Heart left ventricle (tissue), 16 donors: ENCODE measurements at regions of chr11 and their contacts with region 1.

Region 1: GRCh38 chr11:122697636-122698167 is 42.2 kb downstream of the UBASH3B start:
- DNase-seq: no peak
- ATAC-seq: peak in 3 of 4 donors; percentile 56 to 75 (median 57)
- H3K4me3 ChIP-seq: no peak overlapping the region
- H3K27ac ChIP-seq: peak overlapping the region in 1 of 12 donors; percentile 77
- H3K4me1 ChIP-seq: peaks cover 0 to 31% (median 0%) of the 10 kb centered on the region in 12 donors
- H3K27me3 ChIP-seq: no peaks in the 10 kb centered on the region
- CTCF ChIP-seq: no peak
- POLR2A ChIP-seq: no peak

Region 2: GRCh38 chr11:122523846-122524805 is 173.6 kb before region 1 on chr11:
- intact Hi-C with region 1: no loop called
- DNase-seq: peak in 3 of 5 donors; percentile 31 to 51 (median 40)
- ATAC-seq: peak in 3 of 4 donors; percentile 79 to 88 (median 86)
- H3K4me3 ChIP-seq: no peak overlapping the region
- H3K27ac ChIP-seq: peak overlapping the region in 3 of 12 donors; percentile 35 to 54 (median 37)
- H3K4me1 ChIP-seq: peaks cover 0 to 19% (median 10%) of the 10 kb centered on the region in 12 donors
- H3K27me3 ChIP-seq: no peaks in the 10 kb centered on the region
- CTCF ChIP-seq: no peak
- POLR2A ChIP-seq: no peak

Region 3: DNA sequence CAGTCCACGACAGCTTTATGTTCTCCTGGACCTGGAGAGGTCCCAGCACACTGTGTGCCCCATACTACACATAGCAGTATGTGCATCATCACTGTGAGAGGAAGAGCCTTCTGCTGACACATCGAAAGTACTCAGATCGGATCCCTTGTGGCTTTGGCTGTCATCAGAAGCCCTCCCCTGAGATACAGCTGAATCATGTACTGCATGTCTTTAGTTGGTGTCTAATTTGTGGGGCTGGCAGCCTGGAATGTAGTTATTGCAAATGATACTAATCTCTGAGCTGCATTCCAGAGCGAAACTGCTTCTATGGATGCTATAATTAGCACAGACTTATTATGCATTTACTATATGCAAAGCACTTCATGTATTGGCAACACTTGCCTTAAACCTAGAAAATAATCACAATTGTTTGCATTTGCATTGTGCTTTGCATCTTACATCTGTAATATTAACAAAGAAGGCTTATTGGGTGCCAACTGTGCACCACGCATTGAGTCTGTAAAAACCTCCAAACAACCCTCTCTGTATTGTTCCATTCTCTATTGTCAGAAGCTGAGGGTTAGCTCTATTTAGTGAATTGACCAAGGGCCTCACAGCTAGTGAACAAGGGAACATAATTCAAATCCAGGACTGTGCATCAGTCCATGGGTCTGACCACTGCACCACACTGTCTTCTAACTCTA is 51.4 kb after region 1 on chr11:
- intact Hi-C with region 1: loop called in 1 of 10 experiments (anchors 10 kb)
- DNase-seq: peak in 2 of 5 donors; percentile 36 to 39
- ATAC-seq: peak; percentile 86 to 88 (median 88)
- H3K4me3 ChIP-seq: no peak overlapping the region
- H3K27ac ChIP-seq: peak overlapping the region in 1 of 12 donors; percentile 81
- H3K4me1 ChIP-seq: peaks cover 0 to 69% (median 0%) of the 10 kb centered on the region in 12 donors
- H3K27me3 ChIP-seq: no peaks in the 10 kb centered on the region
- CTCF ChIP-seq: no peak
- POLR2A ChIP-seq: no peak

Region 4: DNA sequence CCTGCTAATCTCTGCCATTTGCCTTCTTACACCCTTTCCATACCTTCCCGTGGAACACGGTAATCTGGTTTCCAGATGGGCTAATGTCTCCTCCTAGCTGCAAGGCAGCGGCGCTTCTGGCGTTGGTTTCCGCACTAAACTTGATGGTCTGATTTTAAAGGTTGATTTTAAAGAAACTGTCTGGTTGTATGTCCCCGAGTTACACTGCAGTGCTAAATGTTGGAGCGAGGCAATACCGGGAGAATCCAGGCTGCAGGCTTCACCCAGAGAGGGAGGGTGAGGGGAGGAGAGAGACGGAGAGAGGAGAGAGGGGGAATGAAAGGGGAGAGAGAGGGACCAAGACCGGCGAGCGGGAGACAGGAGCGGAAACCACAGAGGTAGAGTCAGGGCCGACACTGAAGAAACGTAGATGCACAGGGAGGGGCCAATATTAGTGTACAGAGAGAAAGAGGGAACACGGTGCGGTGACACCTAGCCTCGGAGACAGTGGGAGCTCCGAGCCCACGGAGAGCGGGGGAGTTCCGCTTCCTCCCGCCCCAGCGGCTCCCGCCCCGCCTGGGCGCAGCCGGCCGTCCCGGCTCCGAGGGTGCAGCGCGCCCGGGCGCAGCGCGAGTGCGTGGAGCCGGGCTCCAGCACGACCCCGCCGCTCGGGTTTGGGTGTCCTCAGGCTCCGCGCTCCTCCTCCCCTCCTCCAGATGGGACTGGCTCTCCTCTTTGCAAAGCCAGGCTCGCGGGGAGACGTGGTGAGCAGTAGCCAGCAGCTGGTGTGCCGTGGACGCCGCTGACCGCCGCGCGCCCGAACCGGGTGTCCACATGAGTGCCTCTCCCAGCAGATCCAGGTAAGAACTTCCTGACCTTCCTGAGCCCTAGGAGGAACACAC is 660.5 kb after region 1 on chr11:
- intact Hi-C with region 1: no loop called
- DNase-seq: peak; percentile 21 to 65 (median 44)
- ATAC-seq: peak; percentile 39 to 70 (median 63)
- H3K4me3 ChIP-seq: peak overlapping the region; percentile 34 to 69 (median 58)
- H3K27ac ChIP-seq: peak overlapping the region in 11 of 12 donors; percentile 52 to 83 (median 77)
- H3K4me1 ChIP-seq: peaks cover 0 to 26% (median 8%) of the 10 kb centered on the region in 12 donors
- H3K27me3 ChIP-seq: peaks cover 0 to 38% (median 5%) of the 10 kb centered on the region in 9 donors
- CTCF ChIP-seq: peak in 10 of 12 donors; percentile 8 to 57 (median 34)
- POLR2A ChIP-seq: no peak